ENCODE measurements at regions of chr3 and their contacts with region 1.

Region 1: GRCh38 chr3:113531826-113532697 is at the start of gene SIDT1:
- DNase-seq: peak; percentile 81
- ATAC-seq: peak; percentile 80
- H3K4me3 Mint-ChIP-seq: peak within 1 kb of the TSS; percentile 97
- H3K27ac Mint-ChIP-seq: peak within 1 kb of the TSS; percentile 98
- H3K4me1 Mint-ChIP-seq: peaks cover 39% of the 10 kb centered on the region
- H3K27me3 Mint-ChIP-seq: no peaks in the 10 kb centered on the region
- CTCF ChIP-seq: no peak
- total RNA-seq, gene SIDT1: 21.0 to 24.0 TPM

Region 2: GRCh38 chr3:112751564-112752512 is 780.2 kb before region 1 on chr3:
- CTCF ChIA-PET with region 1: no interaction called
- POLR2A ChIA-PET with region 1: no interaction called
- intact Hi-C with region 1: no loop called
- DNase-seq: no peak
- ATAC-seq: no peak
- H3K4me3 Mint-ChIP-seq: no peak overlapping the region
- H3K27ac Mint-ChIP-seq: no peak overlapping the region
- H3K4me1 Mint-ChIP-seq: peaks cover 6% of the 10 kb centered on the region
- H3K27me3 Mint-ChIP-seq: no peaks in the 10 kb centered on the region
- CTCF ChIP-seq: no peak

Region 3: GRCh38 chr3:113454057-113454456 is 78.0 kb before region 1 on chr3:
- CTCF ChIA-PET with region 1: no interaction called
- POLR2A ChIA-PET with region 1: no interaction called
- intact Hi-C with region 1: no loop called
- DNase-seq: no peak
- ATAC-seq: no peak
- H3K4me3 Mint-ChIP-seq: no peak overlapping the region
- H3K27ac Mint-ChIP-seq: no peak overlapping the region
- H3K4me1 Mint-ChIP-seq: no peaks in the 10 kb centered on the region
- H3K27me3 Mint-ChIP-seq: no peaks in the 10 kb centered on the region
- CTCF ChIP-seq: no peak

Region 4: DNA sequence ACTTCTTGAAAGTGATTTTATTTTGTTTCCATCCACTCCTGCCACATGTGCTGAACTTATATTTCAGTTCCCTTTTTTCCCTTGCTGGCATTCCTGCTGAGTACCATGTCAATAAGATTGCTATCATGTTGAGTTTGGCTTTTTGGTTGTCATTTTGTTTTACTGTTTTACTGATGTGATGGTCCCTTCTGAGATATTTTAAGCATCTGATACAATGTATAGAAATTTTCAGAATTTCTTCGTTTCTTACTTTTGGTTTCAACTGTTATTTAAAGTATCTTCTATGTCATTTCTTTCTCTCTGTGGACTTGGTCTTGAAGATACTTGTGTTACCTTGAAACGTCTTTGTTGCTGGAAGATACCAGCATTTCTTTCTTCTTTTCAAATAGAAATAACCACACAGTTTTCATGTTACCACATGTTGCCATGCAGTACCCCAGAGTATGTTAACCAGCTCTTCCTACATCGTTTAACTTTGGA is 14.4 kb after region 1 on chr3:
- CTCF ChIA-PET with region 1: interaction called, 12 read pairs
- POLR2A ChIA-PET with region 1: interaction called, 4 read pairs
- intact Hi-C with region 1: no loop called
- DNase-seq: no peak
- ATAC-seq: peak; percentile 42
- H3K4me3 Mint-ChIP-seq: peak overlapping the region; percentile 62
- H3K27ac Mint-ChIP-seq: peak overlapping the region; percentile 82
- H3K4me1 Mint-ChIP-seq: peaks cover 47% of the 10 kb centered on the region
- H3K27me3 Mint-ChIP-seq: no peaks in the 10 kb centered on the region
- CTCF ChIP-seq: no peak